ENCODE measurements at regions of chr9 and their contacts with region 1.

Region 1: DNA sequence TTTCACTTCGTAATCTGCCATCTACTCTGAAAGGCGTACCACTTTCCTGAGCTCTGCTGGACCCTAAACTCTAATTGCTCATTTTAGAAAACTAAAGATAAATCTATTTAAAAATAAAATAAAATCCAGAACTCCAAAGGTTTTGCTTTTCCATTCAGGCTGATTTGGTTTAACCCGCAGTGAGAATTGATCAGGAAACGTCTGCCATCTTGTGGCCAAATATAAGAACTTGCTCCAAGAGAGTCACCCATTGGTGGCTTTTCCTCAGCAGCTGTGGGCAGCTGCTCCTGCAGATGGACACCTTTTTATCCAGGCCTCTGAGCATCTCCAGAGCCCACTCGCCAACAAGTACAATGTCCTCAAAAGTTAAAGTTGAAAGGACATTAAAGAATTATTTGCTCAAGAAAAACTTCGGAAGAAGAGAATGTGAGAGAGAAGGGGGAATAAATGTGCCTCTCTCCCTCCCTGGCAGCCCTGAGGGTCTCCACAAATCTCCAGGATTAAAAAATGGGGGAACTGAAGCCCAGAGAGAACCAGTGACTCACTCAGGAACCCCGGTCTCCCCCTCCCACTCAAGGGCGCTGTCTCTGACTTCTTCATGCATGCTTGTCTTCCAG is 4.1 kb downstream of the SAXO1 start:
- DNase-seq: peak; percentile 36
- H3K4me3 ChIP-seq: no peak overlapping the region
- H3K27ac ChIP-seq: no peak overlapping the region
- H3K4me1 ChIP-seq: no peaks in the 10 kb centered on the region
- H3K27me3 ChIP-seq: no peaks in the 10 kb centered on the region
- CTCF ChIP-seq: peak; percentile 71 to 77 (median 74)
- POLR2A ChIP-seq: no peak

Region 2: GRCh38 chr9:17531642-17532254 is 1497.2 kb before region 1 on chr9:
- intact Hi-C with region 1: loop called (anchors 10 kb)
- DNase-seq: no peak
- H3K4me3 ChIP-seq: no peak overlapping the region
- H3K27ac ChIP-seq: no peak overlapping the region
- H3K4me1 ChIP-seq: no peaks in the 10 kb centered on the region
- H3K27me3 ChIP-seq: no peaks in the 10 kb centered on the region
- CTCF ChIP-seq: peak in 3 of 4 experiments; percentile 47 to 53 (median 51)
- POLR2A ChIP-seq: no peak

Region 3: DNA sequence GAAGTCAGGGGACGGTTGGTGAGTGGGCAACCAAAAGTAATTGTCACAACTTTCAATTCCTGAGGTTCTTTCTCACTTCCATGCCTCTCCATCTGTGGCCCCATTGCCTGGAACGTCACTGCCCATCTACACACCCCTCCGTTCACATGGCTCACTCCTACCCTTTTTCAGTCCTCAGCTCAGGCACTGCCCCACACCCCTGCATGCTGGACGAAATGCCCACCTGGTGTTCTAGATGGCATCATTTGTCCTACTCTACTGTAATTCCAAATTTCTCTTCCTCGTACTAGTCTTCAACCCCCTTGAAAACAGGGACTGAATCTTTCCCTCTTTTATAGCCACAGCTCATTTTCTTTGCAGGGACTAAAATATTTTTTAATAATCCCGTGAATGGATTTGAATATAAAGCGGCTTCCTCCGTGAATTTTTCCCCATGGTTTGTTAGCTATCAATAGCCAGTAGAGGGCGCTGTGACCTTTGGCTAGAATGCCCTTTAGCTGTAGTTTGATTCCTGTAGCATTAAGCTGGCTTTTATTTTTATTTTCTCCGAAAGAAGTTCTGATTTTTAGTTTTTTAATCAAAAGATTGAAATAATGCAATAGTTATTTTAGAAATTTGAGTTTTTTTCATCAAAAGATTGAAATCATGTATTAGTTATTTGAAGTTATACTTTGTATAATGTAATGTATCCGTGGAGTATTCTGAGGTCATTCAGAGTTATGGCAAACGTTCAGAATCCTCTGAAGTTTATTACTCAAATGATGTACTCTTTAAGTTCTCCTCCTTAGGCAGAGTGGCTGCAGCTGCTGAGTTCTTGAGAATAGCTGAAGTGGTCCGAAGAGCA is 1218.0 kb before region 1 on chr9:
- intact Hi-C with region 1: loop called (anchors 10 kb)
- DNase-seq: peak; percentile 58
- H3K4me3 ChIP-seq: no peak overlapping the region
- H3K27ac ChIP-seq: no peak overlapping the region
- H3K4me1 ChIP-seq: no peaks in the 10 kb centered on the region
- H3K27me3 ChIP-seq: no peaks in the 10 kb centered on the region
- CTCF ChIP-seq: peak; percentile 84 to 95 (median 86)
- POLR2A ChIP-seq: no peak

Region 4: DNA sequence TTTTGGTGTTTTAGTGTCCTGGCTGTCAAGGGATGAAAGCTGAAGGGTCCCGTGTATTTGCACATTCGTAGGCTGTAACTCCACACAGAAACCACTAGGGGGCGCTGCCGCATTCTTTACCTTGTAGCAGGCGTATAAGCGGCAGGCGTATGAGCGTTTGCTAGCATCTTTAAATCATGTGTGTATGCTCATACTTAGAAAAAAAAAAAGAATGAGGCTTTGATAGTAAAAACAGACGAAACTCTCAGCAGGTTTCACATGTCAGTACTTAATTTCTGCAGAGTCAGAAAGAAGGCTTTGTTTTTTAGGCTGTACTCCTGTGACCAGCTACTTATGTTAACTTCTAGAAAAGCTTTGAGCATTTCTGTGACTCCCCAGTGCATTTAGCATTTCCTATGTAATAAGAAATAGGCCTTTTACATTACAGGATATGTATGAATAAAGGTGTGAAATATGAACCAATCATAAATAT is 773.7 kb before region 1 on chr9:
- intact Hi-C with region 1: loop called (anchors 5 kb)
- DNase-seq: peak; percentile 64
- H3K4me3 ChIP-seq: no peak overlapping the region
- H3K27ac ChIP-seq: no peak overlapping the region
- H3K4me1 ChIP-seq: peaks cover under 1% of the 10 kb centered on the region
- H3K27me3 ChIP-seq: no peaks in the 10 kb centered on the region
- CTCF ChIP-seq: peak; percentile 87 to 96 (median 88)
- POLR2A ChIP-seq: no peak

Region 5: GRCh38 chr9:18976709-18977531 is 52.0 kb before region 1 on chr9:
- intact Hi-C with region 1: no loop called
- DNase-seq: no peak
- H3K4me3 ChIP-seq: no peak overlapping the region
- H3K27ac ChIP-seq: no peak overlapping the region
- H3K4me1 ChIP-seq: peaks cover 4% of the 10 kb centered on the region
- H3K27me3 ChIP-seq: no peaks in the 10 kb centered on the region
- CTCF ChIP-seq: no peak
- POLR2A ChIP-seq: no peak

Region 6: GRCh38 chr9:19298436-19299000 is 269.6 kb after region 1 on chr9:
- intact Hi-C with region 1: no loop called
- DNase-seq: no peak
- H3K4me3 ChIP-seq: no peak overlapping the region
- H3K27ac ChIP-seq: no peak overlapping the region
- H3K4me1 ChIP-seq: no peaks in the 10 kb centered on the region
- H3K27me3 ChIP-seq: no peaks in the 10 kb centered on the region
- CTCF ChIP-seq: no peak
- POLR2A ChIP-seq: no peak

Measured in prostate gland (tissue), 2 donors.